ENCODE measurements at regions of chr3 and their contacts with region 1.

Region 1: GRCh38 chr3:15356186-15356585 is 23.8 kb upstream of the SH3BP5 start:
- DNase-seq: no peak
- ATAC-seq: no peak
- H3K4me3 ChIP-seq: peak overlapping the region; percentile 40
- H3K4me3 Mint-ChIP-seq: peak overlapping the region; percentile 67 to 88 (median 76)
- H3K27ac ChIP-seq: peak overlapping the region; percentile 67
- H3K27ac Mint-ChIP-seq: peak overlapping the region; percentile 87 to 99 (median 93)
- H3K4me1 ChIP-seq: peaks cover 19 to 36% of the 10 kb centered on the region in 2 donors
- H3K4me1 Mint-ChIP-seq: peaks cover 28 to 53% (median 45%) of the 10 kb centered on the region in 7 donors
- H3K27me3 ChIP-seq: no peaks in the 10 kb centered on the region
- H3K27me3 Mint-ChIP-seq: no peaks in the 10 kb centered on the region

Region 2: DNA sequence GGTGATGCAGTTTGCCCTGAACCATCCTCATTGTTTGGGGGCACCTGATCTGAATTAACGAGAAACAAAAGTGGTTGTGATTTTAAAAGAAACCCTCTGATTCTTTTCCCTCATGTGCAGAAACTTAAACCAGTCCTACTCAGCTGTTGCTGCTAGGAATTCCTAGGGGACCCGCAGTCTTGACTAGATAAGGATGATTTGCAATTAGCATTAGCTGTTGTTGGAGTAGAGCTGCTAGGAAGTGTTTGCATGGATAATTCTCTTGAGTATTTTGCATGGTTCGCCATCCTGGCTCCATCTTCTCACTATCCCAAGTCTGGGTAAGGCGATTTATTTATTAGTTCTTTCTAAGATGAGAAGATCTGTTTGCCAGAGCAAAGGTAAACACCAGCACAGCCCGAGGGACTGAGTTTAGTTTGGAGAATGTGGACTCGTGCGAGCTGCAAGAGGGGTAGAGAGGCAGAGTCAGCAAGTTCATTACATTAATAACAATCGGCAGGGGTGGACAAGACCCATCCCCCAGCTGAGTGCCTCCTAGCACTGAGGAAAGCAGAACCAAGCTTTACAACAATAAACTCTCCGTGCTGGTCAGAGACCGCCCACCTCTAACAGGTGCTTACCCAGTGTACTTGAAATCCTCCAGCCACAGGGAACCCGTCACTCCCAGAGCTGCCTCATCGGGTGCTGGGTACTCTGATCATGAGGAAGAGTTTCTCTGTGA is 533.4 kb before region 1 on chr3:
- CTCF ChIA-PET with region 1: no interaction called
- POLR2A ChIA-PET with region 1: no interaction called
- intact Hi-C with region 1: no loop called
- DNase-seq: no peak
- ATAC-seq: peak; percentile 31
- H3K4me3 ChIP-seq: no peak overlapping the region
- H3K4me3 Mint-ChIP-seq: no peak overlapping the region
- H3K27ac ChIP-seq: no peak overlapping the region
- H3K27ac Mint-ChIP-seq: no peak overlapping the region
- H3K4me1 ChIP-seq: no peaks in the 10 kb centered on the region
- H3K4me1 Mint-ChIP-seq: peaks cover 0 to 4% (median 0%) of the 10 kb centered on the region in 7 donors
- H3K27me3 ChIP-seq: no peaks in the 10 kb centered on the region
- H3K27me3 Mint-ChIP-seq: peaks cover 2 to 28% (median 10%) of the 10 kb centered on the region in 5 donors

Region 3: DNA sequence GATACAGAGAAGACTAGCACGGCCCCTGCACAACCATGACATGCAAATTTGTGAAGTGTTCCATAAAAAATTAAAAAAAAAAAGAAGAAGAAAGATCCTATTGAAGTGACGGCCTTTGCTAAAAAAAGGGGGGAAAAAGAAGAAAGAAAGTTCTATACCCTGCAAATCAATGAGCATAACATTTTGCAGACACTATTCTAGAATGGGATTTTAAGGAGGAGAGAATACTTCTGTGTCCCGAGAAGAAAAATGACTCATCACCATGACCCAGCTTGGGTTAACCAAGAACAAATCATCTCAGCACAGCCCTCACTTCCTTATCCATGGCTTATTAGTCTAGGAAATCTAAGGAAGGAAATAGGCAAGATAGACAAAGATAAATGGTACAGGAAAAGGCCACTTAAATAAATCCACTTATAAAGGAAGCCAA is 16.4 kb before region 1 on chr3:
- CTCF ChIA-PET with region 1: interaction called, 4 read pairs
- POLR2A ChIA-PET with region 1: interaction called, 7 read pairs
- intact Hi-C with region 1: loop called in 1 of 2 experiments (anchors 2 kb)
- DNase-seq: no peak
- ATAC-seq: peak; percentile 60
- H3K4me3 ChIP-seq: no peak overlapping the region
- H3K4me3 Mint-ChIP-seq: no peak overlapping the region
- H3K27ac ChIP-seq: no peak overlapping the region
- H3K27ac Mint-ChIP-seq: peak overlapping the region in 1 of 9 donors; percentile 43
- H3K4me1 ChIP-seq: peaks cover 0 to 5% of the 10 kb centered on the region in 2 donors
- H3K4me1 Mint-ChIP-seq: peaks cover 13 to 47% (median 26%) of the 10 kb centered on the region in 7 donors
- H3K27me3 ChIP-seq: no peaks in the 10 kb centered on the region
- H3K27me3 Mint-ChIP-seq: peaks cover 0 to 20% (median 0%) of the 10 kb centered on the region in 5 donors

Region 4: DNA sequence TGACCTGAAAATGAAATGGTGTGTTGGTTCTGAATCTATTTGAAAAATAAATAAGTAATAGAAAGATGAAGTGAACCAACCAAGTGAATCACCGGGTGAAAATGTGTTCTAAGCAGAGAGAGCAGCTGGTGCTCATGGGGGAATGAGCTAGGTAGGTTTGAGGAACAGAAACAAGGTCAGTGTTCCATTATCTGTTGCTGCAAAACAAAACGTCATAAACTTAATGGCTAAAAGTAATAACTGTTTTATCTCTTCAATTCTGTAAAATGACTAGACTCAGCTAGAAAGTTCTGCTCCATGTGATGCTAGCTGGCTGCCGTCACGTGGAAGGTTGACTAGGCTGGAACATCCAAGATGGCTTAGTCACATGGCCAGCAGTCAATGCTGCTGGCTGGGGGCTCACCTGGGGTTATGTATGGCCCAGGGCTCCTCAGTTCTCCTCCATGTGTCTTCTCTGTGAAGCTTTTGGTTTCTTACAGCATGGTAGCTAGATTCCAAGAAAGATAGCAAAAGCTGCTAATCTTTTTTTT is 10.5 kb before region 1 on chr3:
- CTCF ChIA-PET with region 1: interaction called, 3 read pairs
- POLR2A ChIA-PET with region 1: interaction called, 5 read pairs
- intact Hi-C with region 1: loop called in 1 of 2 experiments (anchors 1 kb)
- DNase-seq: no peak
- ATAC-seq: peak; percentile 51
- H3K4me3 ChIP-seq: no peak overlapping the region
- H3K4me3 Mint-ChIP-seq: peak overlapping the region in 2 of 10 donors; percentile 39 to 45
- H3K27ac ChIP-seq: no peak overlapping the region
- H3K27ac Mint-ChIP-seq: peak overlapping the region in 8 of 9 donors; percentile 14 to 98 (median 56)
- H3K4me1 ChIP-seq: peaks cover 34 to 37% of the 10 kb centered on the region in 2 donors
- H3K4me1 Mint-ChIP-seq: peaks cover 38 to 80% (median 68%) of the 10 kb centered on the region in 7 donors
- H3K27me3 ChIP-seq: no peaks in the 10 kb centered on the region
- H3K27me3 Mint-ChIP-seq: peaks cover 0 to 21% (median 0%) of the 10 kb centered on the region in 5 donors

Region 5: GRCh38 chr3:15903164-15903563 is 547.0 kb after region 1 on chr3:
- CTCF ChIA-PET with region 1: no interaction called
- POLR2A ChIA-PET with region 1: no interaction called
- intact Hi-C with region 1: no loop called
- DNase-seq: no peak
- ATAC-seq: no peak
- H3K4me3 ChIP-seq: no peak overlapping the region
- H3K4me3 Mint-ChIP-seq: no peak overlapping the region
- H3K27ac ChIP-seq: no peak overlapping the region
- H3K27ac Mint-ChIP-seq: peak overlapping the region in 1 of 9 donors; percentile 8
- H3K4me1 ChIP-seq: no peaks in the 10 kb centered on the region
- H3K4me1 Mint-ChIP-seq: no peaks in the 10 kb centered on the region
- H3K27me3 ChIP-seq: no peaks in the 10 kb centered on the region
- H3K27me3 Mint-ChIP-seq: no peaks in the 10 kb centered on the region

Measured in naive thymus-derived CD4-positive, alpha-beta T cell (primary cell).